ENCODE measurements at regions of chr17 and their contacts with region 1.

Region 1: GRCh38 chr17:65231662-65232335 is 94.6 kb downstream of the RGS9 start:
- DNase-seq: peak; percentile 45
- H3K4me3 ChIP-seq: no peak overlapping the region
- H3K27ac ChIP-seq: no peak overlapping the region
- H3K4me1 ChIP-seq: peaks cover 0 to 11% (median 4%) of the 10 kb centered on the region in 4 donors
- H3K27me3 ChIP-seq: no peaks in the 10 kb centered on the region
- CTCF ChIP-seq: peak; percentile 38 to 68 (median 59)
- EP300 ChIP-seq: no peak
- POLR2A ChIP-seq: no peak

Region 2: GRCh38 chr17:65774787-65775186 is 543.0 kb after region 1 on chr17:
- in situ Hi-C with region 1: no loop called
- intact Hi-C with region 1: no loop called
- DNase-seq: no peak
- H3K4me3 ChIP-seq: no peak overlapping the region
- H3K27ac ChIP-seq: no peak overlapping the region
- H3K4me1 ChIP-seq: peaks cover 0 to 5% (median 2%) of the 10 kb centered on the region in 4 donors
- H3K27me3 ChIP-seq: no peaks in the 10 kb centered on the region
- CTCF ChIP-seq: no peak
- EP300 ChIP-seq: no peak
- POLR2A ChIP-seq: no peak

Region 3: DNA sequence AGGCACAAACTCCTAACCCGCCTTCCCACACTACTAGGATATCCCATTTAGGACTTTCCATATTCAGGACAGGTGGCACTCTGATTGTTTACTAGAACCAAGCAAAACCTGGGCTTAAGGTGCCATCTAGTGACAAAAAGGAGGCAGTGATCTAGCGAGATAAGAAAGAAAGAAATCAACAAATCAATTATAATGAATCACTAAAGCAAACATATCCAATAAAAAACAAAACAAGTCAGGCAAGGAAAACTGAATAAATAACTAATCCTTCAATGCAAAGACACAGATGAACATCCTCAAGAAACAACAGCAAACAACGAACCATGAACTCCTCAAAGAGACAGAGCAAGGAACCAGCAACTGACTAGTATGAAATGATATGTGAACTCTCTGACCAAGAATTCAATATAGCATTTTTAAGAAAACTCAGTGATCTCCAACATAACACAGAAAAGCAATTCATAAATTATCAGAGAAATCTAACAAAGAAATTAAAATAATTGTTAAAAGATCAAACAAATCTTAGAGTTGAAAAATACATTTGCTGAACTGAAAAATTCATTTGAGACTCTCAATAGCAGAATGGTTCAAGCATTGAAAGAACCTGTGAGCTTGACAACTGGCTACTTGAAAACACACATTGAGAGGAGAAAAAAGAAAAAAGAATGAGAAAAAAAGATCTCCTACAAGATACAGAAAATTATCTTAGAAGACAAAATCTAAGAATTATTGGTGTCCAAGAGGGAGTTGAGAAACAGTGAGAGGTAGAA is 756.5 kb after region 1 on chr17:
- in situ Hi-C with region 1: loop called in 2 of 4 experiments (anchors 25 kb)
- intact Hi-C with region 1: no loop called
- DNase-seq: peak; percentile 11
- H3K4me3 ChIP-seq: no peak overlapping the region
- H3K27ac ChIP-seq: no peak overlapping the region
- H3K4me1 ChIP-seq: no peaks in the 10 kb centered on the region
- H3K27me3 ChIP-seq: no peaks in the 10 kb centered on the region
- CTCF ChIP-seq: peak; percentile 27 to 83 (median 46)
- EP300 ChIP-seq: no peak
- POLR2A ChIP-seq: no peak

Region 4: GRCh38 chr17:66165513-66166123 is 933.8 kb after region 1 on chr17:
- in situ Hi-C with region 1: loop called in 2 of 4 experiments (anchors 10 kb)
- intact Hi-C with region 1: no loop called
- DNase-seq: no peak
- H3K4me3 ChIP-seq: no peak overlapping the region
- H3K27ac ChIP-seq: no peak overlapping the region
- H3K4me1 ChIP-seq: no peaks in the 10 kb centered on the region
- H3K27me3 ChIP-seq: no peaks in the 10 kb centered on the region
- CTCF ChIP-seq: peak; percentile 64 to 83 (median 72)
- EP300 ChIP-seq: no peak
- POLR2A ChIP-seq: no peak